ENCODE measurements at regions of chr19 and their contacts with region 1.

Region 1: DNA sequence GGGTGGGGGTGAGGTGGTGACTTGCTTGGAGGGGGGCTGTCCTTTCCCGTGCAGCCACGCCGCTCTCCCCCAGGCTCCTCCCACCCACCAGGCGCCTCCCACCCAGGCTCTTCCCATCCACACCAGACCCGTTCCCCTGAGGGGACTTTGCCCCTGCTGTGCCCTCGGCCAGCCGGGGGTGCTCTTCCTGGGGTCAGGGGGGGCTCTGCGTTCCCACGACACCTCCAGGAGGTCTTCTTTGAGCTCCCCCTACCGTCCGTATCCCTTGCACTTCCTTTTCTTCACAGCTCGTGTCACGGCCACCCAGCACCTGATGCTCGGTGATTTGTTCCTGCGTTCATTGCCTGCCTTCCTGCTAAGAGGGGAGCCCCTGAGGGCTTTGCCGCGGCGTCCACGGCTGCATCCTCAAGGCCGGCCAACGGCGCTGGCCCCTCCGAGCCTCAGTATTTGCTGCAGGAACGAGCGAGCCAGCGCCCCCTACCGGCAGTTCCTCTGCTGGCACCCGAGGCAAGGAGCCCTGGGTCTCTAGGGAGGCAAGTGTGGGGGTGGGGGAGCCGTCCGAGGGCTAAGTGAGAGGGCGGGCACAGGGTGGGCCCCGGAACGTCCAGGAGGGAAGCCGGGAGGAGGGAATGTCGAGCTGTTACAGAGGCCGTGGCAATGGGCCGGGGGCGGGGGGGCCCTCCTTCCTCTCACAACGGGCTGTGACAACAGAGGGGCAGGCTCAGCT is 11.8 kb downstream of the LRRC4B start:
- DNase-seq: peak; percentile 85 to 91 (median 87)
- H3K4me3 ChIP-seq: peak overlapping the region; percentile 33 to 77 (median 60)
- H3K27ac ChIP-seq: peak overlapping the region in 55 of 59 donors; percentile 10 to 87 (median 75)
- H3K27me3 ChIP-seq: no peaks in the 10 kb centered on the region
- CTCF ChIP-seq: peak; percentile 70 to 98 (median 87)

Region 2: GRCh38 chr19:50542943-50543342 is 13.5 kb before region 1 on chr19:
- intact Hi-C with region 1: no loop called
- DNase-seq: peak in 1 of 10 donors; percentile 74
- H3K4me3 ChIP-seq: peak overlapping the region in 10 of 59 donors; percentile 14 to 53 (median 37)
- H3K27ac ChIP-seq: peak overlapping the region in 56 of 59 donors; percentile 19 to 91 (median 77)
- H3K27me3 ChIP-seq: no peaks in the 10 kb centered on the region
- CTCF ChIP-seq: no peak

Region 3: DNA sequence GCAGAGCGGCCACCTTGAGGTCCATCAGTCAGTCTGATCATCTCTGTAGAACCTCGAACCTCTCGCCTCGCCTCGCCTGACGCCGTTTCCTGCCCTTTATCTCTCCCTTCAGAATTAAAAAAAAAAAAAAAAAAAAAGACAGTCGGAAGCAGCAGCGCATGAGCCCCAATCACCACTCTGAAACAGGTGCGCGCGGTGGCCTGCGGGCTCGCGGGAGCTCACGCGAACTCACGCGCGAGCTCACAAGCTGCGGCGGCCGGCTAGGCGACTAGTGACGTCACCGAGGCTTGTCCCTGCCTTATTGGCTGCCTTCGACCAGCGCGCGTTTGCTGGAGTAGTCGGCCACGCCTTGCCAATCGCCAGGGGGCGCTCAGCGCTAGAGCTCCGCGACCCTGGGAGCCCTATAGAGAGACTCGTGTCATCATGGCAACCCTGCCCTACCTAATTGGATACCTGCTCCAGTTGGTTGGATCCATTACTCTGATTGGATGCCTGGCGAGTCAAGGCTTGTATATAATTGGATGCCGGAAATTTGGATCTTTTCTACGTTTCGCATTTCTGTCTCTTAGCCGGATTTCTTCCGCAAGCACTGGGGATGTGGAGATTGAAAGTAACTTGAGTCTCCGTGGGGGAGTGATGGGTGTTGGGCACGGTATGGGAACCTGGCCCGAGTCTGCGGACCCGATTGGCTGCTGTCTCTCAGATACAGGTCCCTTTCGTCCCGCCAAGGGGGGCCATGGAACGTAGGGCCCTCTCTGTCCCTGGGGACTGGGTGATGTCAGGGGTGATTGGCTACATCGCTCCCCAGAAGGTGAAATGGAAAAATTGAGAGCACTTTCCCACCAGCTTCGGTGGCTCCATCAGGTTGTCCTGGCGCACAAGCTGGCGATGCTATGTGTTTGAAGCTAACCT is 51.7 kb after region 1 on chr19:
- intact Hi-C with region 1: loop called in 1 of 2 experiments (anchors 5 kb)
- DNase-seq: peak; percentile 92 to 99 (median 98)
- H3K4me3 ChIP-seq: peak overlapping the region in 56 of 59 donors; percentile 11 to 65 (median 46)
- H3K27ac ChIP-seq: peak overlapping the region in 44 of 59 donors; percentile 19 to 79 (median 61)
- H3K27me3 ChIP-seq: no peaks in the 10 kb centered on the region
- CTCF ChIP-seq: peak; percentile 42 to 94 (median 84)

Region 4: GRCh38 chr19:50909240-50910070 is 353.0 kb after region 1 on chr19:
- intact Hi-C with region 1: no loop called
- DNase-seq: no peak
- H3K4me3 ChIP-seq: peak overlapping the region in 6 of 59 donors; percentile 10 to 33 (median 29)
- H3K27ac ChIP-seq: no peak overlapping the region
- H3K27me3 ChIP-seq: peaks cover 0 to 86% (median 76%) of the 10 kb centered on the region in 45 donors
- CTCF ChIP-seq: no peak

Measured in dorsolateral prefrontal cortex (tissue), 120 donors.